CD4-positive, alpha-beta T cell (primary cell): ENCODE measurements at regions of chr3 and their contacts with region 1.

Region 1: GRCh38 chr3:128274771-128275211 is 121.5 kb downstream of the EEFSEC start:
- DNase-seq: no peak
- ATAC-seq: no peak
- H3K4me3 ChIP-seq: no peak overlapping the region
- H3K4me3 Mint-ChIP-seq: no peak overlapping the region
- H3K27ac ChIP-seq: no peak overlapping the region
- H3K27ac Mint-ChIP-seq: no peak overlapping the region
- H3K4me1 ChIP-seq: no peaks in the 10 kb centered on the region
- H3K4me1 Mint-ChIP-seq: peaks cover 5% of the 10 kb centered on the region
- H3K27me3 ChIP-seq: no peaks in the 10 kb centered on the region
- H3K27me3 Mint-ChIP-seq: no peaks in the 10 kb centered on the region
- CTCF ChIP-seq: no peak

Region 2: DNA sequence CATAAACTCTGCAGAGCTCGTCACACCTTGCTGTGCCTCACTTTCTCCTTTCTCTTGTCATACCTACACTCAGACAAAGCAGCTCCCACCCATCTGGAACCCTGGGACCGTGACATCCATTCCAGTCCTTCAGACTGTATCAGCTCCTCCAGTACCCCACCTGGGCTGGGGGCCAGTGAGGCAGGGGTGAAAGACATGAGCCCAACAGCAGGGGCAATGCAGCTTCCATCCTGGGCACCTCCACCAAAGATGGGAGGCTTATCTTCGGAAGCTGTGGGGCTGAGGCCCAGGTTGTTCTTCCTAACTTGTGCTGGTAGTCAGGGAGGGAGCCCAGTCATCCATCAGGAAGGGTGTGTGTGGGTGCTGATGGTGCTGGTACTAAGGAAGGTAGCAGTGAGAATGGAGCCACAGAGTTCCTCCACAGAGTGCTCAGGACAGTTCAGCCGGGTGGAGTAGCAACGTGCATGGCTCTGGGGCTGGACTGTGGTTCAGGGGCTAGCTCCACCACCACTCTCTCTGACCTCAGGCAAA is 12.3 kb before region 1 on chr3:
- CTCF ChIA-PET with region 1: no interaction called
- POLR2A ChIA-PET with region 1: interaction called, 3 read pairs
- intact Hi-C with region 1: loop called in 1 of 2 experiments (anchors 1 kb)
- DNase-seq: no peak
- ATAC-seq: no peak
- H3K4me3 ChIP-seq: no peak overlapping the region
- H3K4me3 Mint-ChIP-seq: no peak overlapping the region
- H3K27ac ChIP-seq: no peak overlapping the region
- H3K27ac Mint-ChIP-seq: no peak overlapping the region
- H3K4me1 ChIP-seq: no peaks in the 10 kb centered on the region
- H3K4me1 Mint-ChIP-seq: peaks cover under 1% of the 10 kb centered on the region
- H3K27me3 ChIP-seq: no peaks in the 10 kb centered on the region
- H3K27me3 Mint-ChIP-seq: no peaks in the 10 kb centered on the region
- CTCF ChIP-seq: no peak

Region 3: GRCh38 chr3:128293930-128294329 is 19.1 kb after region 1 on chr3:
- CTCF ChIA-PET with region 1: no interaction called
- POLR2A ChIA-PET with region 1: no interaction called
- intact Hi-C with region 1: no loop called
- DNase-seq: peak in 1 of 14 experiments; percentile 27
- ATAC-seq: no peak
- H3K4me3 ChIP-seq: no peak overlapping the region
- H3K4me3 Mint-ChIP-seq: peak overlapping the region; percentile 57
- H3K27ac ChIP-seq: peak overlapping the region; percentile 64 to 79
- H3K27ac Mint-ChIP-seq: peak overlapping the region; percentile 95
- H3K4me1 ChIP-seq: peaks cover 43% of the 10 kb centered on the region
- H3K4me1 Mint-ChIP-seq: peaks cover 77% of the 10 kb centered on the region
- H3K27me3 ChIP-seq: no peaks in the 10 kb centered on the region
- H3K27me3 Mint-ChIP-seq: no peaks in the 10 kb centered on the region
- CTCF ChIP-seq: no peak

Region 4: DNA sequence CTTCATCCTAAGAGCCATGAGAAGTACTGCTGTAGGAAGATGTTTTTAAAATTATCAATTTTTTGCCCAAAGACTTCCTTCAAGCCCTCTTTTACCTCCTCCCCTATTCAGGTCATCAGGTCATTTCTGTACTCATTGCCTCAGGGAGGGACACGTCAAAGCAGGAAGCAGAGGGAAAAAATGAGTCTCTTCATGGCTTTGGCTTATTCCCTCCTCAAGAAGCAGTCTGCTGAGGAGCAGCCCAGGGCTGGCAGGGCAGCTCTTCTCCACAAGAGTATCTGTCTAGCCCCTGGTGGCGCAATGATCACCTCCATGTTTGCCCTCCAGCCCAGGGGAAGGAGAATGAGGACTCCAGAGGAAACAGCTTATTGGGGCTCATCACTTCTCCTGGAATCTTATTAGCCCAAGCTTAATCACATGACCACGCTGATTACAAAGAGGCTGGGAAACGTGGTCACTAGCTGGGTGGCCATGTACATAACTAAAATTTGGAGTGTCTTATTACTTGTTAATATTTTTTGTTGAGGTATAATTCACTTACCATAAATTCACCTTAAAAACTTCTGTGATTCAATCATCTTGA is 262.4 kb after region 1 on chr3:
- CTCF ChIA-PET with region 1: no interaction called
- POLR2A ChIA-PET with region 1: no interaction called
- intact Hi-C with region 1: no loop called
- DNase-seq: no peak
- ATAC-seq: no peak
- H3K4me3 ChIP-seq: no peak overlapping the region
- H3K4me3 Mint-ChIP-seq: no peak overlapping the region
- H3K27ac ChIP-seq: no peak overlapping the region
- H3K27ac Mint-ChIP-seq: no peak overlapping the region
- H3K4me1 ChIP-seq: no peaks in the 10 kb centered on the region
- H3K4me1 Mint-ChIP-seq: no peaks in the 10 kb centered on the region
- H3K27me3 ChIP-seq: peaks cover 31 to 33% of the 10 kb centered on the region in 2 experiments
- H3K27me3 Mint-ChIP-seq: peaks cover 92% of the 10 kb centered on the region
- CTCF ChIP-seq: no peak